ENCODE measurements at regions of chr20 and their contacts with region 1.

Region 1: GRCh38 chr20:13243826-13244376 is 22.8 kb downstream of the ISM1 start:
- DNase-seq: peak; percentile 100
- ATAC-seq: peak; percentile 99
- H3K4me3 ChIP-seq: no peak overlapping the region
- H3K27ac ChIP-seq: peak overlapping the region; percentile 37
- H3K4me1 ChIP-seq: peaks cover 65% of the 10 kb centered on the region
- H3K27me3 ChIP-seq: no peaks in the 10 kb centered on the region
- CTCF ChIP-seq: no peak
- EP300 ChIP-seq: peak; percentile 97 to 99
- POLR2A ChIP-seq: peak in 1 of 2 experiments; percentile 57; a peak in 1 of 4 replicates
- RAD21 ChIP-seq: no peak

Region 2: GRCh38 chr20:12977328-12978125 is 266.4 kb before region 1 on chr20:
- CTCF ChIA-PET with region 1: no interaction called
- POLR2A ChIA-PET with region 1: interaction called, 10 read pairs
- in situ Hi-C with region 1: no loop called
- intact Hi-C with region 1: loop called (anchors 1 kb)
- DNase-seq: peak; percentile 92
- ATAC-seq: peak; percentile 80
- H3K4me3 ChIP-seq: peak overlapping the region; percentile 1 to 43 (median 40); a peak in 5 of 6 replicates
- H3K27ac ChIP-seq: peak overlapping the region; percentile 80
- H3K4me1 ChIP-seq: peaks cover 61% of the 10 kb centered on the region
- H3K27me3 ChIP-seq: no peaks in the 10 kb centered on the region
- CTCF ChIP-seq: no peak
- EP300 ChIP-seq: peak in 1 of 2 experiments; percentile 97; a peak in 2 of 4 replicates
- POLR2A ChIP-seq: 0 out of 4 replicates have a peak, but pooled peaks of 1 of the 2 experiments have one; percentile 22
- RAD21 ChIP-seq: no peak

Region 3: GRCh38 chr20:13221673-13222318 is 22.1 kb before region 1 on chr20:
- CTCF ChIA-PET with region 1: no interaction called
- POLR2A ChIA-PET with region 1: interaction called, 12 read pairs
- in situ Hi-C with region 1: no loop called
- intact Hi-C with region 1: loop called (anchors 1 kb)
- DNase-seq: peak; percentile 65
- ATAC-seq: peak; percentile 89
- H3K4me3 ChIP-seq: peak overlapping the region; percentile 65 to 81 (median 77)
- H3K27ac ChIP-seq: no peak overlapping the region
- H3K4me1 ChIP-seq: peaks cover 22% of the 10 kb centered on the region
- H3K27me3 ChIP-seq: peaks cover 0 to 35% of the 10 kb centered on the region in 2 experiments; a peak in 3 of 5 replicates
- CTCF ChIP-seq: peak; percentile 27; the same call in 1 of the 2 replicates
- EP300 ChIP-seq: no peak
- POLR2A ChIP-seq: 0 out of 4 replicates have a peak, but pooled peaks of 1 of the 2 experiments have one; percentile 19
- RAD21 ChIP-seq: peak; percentile 73

Region 4: DNA sequence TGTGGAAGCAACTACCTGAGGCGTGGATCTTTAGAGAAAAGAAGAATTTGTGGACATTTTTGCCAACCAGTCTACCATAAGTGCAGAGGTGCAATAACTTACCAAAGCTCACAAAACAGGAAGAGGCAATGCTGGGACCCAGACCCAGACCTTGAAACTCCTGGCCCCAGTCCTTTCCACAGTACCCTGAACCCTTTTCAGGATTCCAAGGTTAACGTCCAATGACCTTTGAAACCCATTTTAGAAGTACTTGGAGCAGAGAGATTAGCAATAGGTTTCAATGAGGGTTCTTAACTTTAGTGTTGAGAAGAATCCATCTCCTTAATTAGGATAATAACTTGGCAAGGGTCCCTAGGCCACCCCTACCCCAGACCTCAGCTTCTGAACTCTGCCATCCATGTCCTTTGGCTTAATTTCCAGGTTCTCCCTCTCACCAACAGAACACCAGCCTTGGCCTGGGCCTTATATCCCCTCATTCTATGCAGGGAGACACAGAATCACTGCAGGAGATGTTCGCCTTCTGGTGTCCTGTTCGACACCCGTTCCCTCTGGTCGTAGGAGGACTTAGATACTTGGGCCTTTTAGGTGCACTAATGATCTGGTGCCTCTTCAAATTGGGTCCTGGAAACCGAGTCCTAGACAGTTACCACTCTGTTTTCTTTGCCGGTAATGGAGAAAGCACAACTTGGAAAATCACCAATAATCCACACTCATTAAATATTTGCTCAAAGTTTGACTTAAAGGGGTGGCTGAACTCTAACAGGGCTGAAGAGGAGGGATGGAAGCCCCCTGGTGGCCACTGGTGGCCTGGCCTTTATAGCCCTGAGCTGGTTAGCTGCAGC is 17.8 kb after region 1 on chr20:
- CTCF ChIA-PET with region 1: interaction called, 7 read pairs
- POLR2A ChIA-PET with region 1: interaction called, 31 read pairs
- in situ Hi-C with region 1: no loop called
- intact Hi-C with region 1: loop called (anchors 1 kb)
- DNase-seq: peak; percentile 86
- ATAC-seq: peak; percentile 99
- H3K4me3 ChIP-seq: no peak overlapping the region
- H3K27ac ChIP-seq: no peak overlapping the region
- H3K4me1 ChIP-seq: peaks cover 32% of the 10 kb centered on the region
- H3K27me3 ChIP-seq: no peaks in the 10 kb centered on the region
- CTCF ChIP-seq: peak; percentile 96
- EP300 ChIP-seq: 0 out of 4 replicates have a peak, but pooled peaks of 1 of the 2 experiments have one; percentile 39
- POLR2A ChIP-seq: no peak
- RAD21 ChIP-seq: peak; percentile 95

Region 5: GRCh38 chr20:13286607-13287006 is 42.7 kb after region 1 on chr20:
- CTCF ChIA-PET with region 1: no interaction called
- POLR2A ChIA-PET with region 1: no interaction called
- in situ Hi-C with region 1: no loop called
- intact Hi-C with region 1: loop called (anchors 2 kb)
- DNase-seq: no peak
- ATAC-seq: 0 out of 3 replicates have a peak, but pooled peaks have one; percentile 19
- H3K4me3 ChIP-seq: no peak overlapping the region
- H3K27ac ChIP-seq: no peak overlapping the region
- H3K4me1 ChIP-seq: peaks cover 10% of the 10 kb centered on the region
- H3K27me3 ChIP-seq: no peaks in the 10 kb centered on the region; a peak in 1 of 5 replicates
- CTCF ChIP-seq: no peak
- EP300 ChIP-seq: no peak
- POLR2A ChIP-seq: no peak
- RAD21 ChIP-seq: no peak

Region 6: GRCh38 chr20:13784893-13785715 is 541.2 kb after region 1 on chr20 and contains the starts of genes ESF1 and NDUFAF5:
- CTCF ChIA-PET with region 1: no interaction called
- POLR2A ChIA-PET with region 1: interaction called, 3 read pairs
- in situ Hi-C with region 1: no loop called
- intact Hi-C with region 1: loop called (anchors 10 kb)
- DNase-seq: peak; percentile 99
- ATAC-seq: peak; percentile 95
- H3K4me3 ChIP-seq: peak within 1 kb of the TSS; percentile 84 to 90 (median 86)
- H3K27ac ChIP-seq: peak within 1 kb of the TSS; percentile 93
- H3K4me1 ChIP-seq: peaks cover 66% of the 10 kb centered on the region
- H3K27me3 ChIP-seq: no peaks in the 10 kb centered on the region; a peak in 1 of 5 replicates
- CTCF ChIP-seq: peak; percentile 42
- EP300 ChIP-seq: peak; percentile 69 to 76; a peak in 2 of 4 replicates
- POLR2A ChIP-seq: peak; percentile 40 to 87; a peak in 3 of 4 replicates
- RAD21 ChIP-seq: peak; percentile 24
- total RNA-seq, gene ESF1: 66.9 and 95.1 TPM in 2 replicates
- total RNA-seq, gene NDUFAF5: 66.7 and 86.0 TPM in 2 replicates

Measured in HepG2 (cell line).